ENCODE measurements at regions of chr3 and their contacts with region 1.

Region 1: DNA sequence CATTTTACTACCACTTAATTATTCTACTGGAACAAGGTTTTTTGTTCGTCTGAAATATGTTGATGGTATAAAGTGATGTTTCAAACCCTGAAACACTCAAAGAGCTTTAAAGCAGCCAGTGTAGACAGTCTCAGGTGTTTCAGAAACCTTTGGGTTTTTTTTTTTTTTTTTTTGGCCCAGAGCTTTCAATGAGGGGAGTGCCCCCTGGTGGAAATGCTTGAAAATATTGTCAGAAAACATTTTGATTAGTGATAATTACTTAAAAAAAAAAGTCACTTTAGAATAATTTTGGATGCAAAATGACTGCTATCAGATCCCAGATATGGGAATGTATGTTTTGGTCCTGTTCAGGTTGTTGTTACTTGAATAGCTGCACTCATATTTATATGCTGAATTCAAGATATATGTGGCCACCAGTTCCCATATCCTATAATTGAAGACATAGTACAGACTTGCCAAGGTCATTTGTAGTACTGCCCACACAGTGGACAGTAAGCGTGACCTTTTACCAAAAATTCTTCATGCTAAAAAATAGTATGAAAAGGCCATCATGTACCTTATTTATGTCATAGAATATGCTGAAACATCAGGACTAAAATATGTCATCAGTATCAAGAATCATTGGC is 35.9 kb downstream of the SATB1 start:
- DNase-seq: peak; percentile 54 to 73 (median 64)
- H3K4me3 ChIP-seq: no peak overlapping the region
- H3K27ac ChIP-seq: no peak overlapping the region
- H3K4me1 ChIP-seq: peaks cover 0 to 21% (median 4%) of the 10 kb centered on the region in 4 experiments
- H3K27me3 ChIP-seq: no peaks in the 10 kb centered on the region

Region 2: GRCh38 chr3:17905996-17906395 is 483.2 kb before region 1 on chr3:
- CTCF ChIA-PET with region 1: interaction called, 26 read pairs
- POLR2A ChIA-PET with region 1: no interaction called
- DNase-seq: peak; percentile 83 to 95 (median 93)
- H3K4me3 ChIP-seq: no peak overlapping the region
- H3K27ac ChIP-seq: peak overlapping the region in 1 of 2 experiments; percentile 19
- H3K4me1 ChIP-seq: peaks cover 20 to 66% (median 46%) of the 10 kb centered on the region in 4 experiments
- H3K27me3 ChIP-seq: no peaks in the 10 kb centered on the region

Region 3: GRCh38 chr3:18344306-18345014 is 44.8 kb before region 1 on chr3:
- CTCF ChIA-PET with region 1: no interaction called
- POLR2A ChIA-PET with region 1: no interaction called
- DNase-seq: no peak
- H3K4me3 ChIP-seq: no peak overlapping the region
- H3K27ac ChIP-seq: no peak overlapping the region
- H3K4me1 ChIP-seq: no peaks in the 10 kb centered on the region
- H3K27me3 ChIP-seq: no peaks in the 10 kb centered on the region

Region 4: DNA sequence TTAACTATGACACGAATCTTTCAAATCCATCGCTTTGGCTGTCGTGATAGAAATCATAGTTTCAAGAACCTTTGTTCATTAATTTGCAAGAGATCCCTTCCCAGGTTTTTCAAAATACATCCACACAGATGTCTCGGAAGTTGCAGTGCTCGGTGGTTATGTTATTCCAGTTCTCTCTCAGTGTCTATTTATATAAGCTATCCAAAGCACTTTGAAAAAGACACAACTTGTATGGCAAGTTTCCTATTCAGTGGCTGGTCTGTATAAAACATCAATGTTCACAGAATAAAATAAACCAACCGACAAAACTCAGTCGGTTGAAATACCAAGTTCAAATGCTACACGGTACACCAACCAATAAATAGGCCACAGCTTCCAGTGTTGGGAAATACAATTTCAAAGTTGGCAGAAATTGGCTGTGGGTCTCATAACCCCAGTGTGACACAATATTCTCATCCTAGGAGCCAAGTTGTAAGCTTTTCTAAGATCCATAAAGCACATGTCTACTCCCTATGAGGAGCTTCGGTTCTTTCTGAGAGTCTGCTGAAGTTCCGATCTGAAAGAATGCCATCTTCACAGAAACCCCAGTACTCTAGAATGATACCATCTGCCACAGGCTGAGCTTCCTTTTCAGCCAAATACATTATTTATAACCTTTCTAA is 12.2 kb after region 1 on chr3:
- CTCF ChIA-PET with region 1: interaction called, 18 read pairs
- POLR2A ChIA-PET with region 1: no interaction called
- DNase-seq: no peak
- H3K4me3 ChIP-seq: no peak overlapping the region
- H3K27ac ChIP-seq: no peak overlapping the region
- H3K4me1 ChIP-seq: peaks cover 4 to 22% (median 4%) of the 10 kb centered on the region in 4 experiments
- H3K27me3 ChIP-seq: no peaks in the 10 kb centered on the region